ENCODE measurements at regions of chr1 and their contacts with region 1.

Region 1: DNA sequence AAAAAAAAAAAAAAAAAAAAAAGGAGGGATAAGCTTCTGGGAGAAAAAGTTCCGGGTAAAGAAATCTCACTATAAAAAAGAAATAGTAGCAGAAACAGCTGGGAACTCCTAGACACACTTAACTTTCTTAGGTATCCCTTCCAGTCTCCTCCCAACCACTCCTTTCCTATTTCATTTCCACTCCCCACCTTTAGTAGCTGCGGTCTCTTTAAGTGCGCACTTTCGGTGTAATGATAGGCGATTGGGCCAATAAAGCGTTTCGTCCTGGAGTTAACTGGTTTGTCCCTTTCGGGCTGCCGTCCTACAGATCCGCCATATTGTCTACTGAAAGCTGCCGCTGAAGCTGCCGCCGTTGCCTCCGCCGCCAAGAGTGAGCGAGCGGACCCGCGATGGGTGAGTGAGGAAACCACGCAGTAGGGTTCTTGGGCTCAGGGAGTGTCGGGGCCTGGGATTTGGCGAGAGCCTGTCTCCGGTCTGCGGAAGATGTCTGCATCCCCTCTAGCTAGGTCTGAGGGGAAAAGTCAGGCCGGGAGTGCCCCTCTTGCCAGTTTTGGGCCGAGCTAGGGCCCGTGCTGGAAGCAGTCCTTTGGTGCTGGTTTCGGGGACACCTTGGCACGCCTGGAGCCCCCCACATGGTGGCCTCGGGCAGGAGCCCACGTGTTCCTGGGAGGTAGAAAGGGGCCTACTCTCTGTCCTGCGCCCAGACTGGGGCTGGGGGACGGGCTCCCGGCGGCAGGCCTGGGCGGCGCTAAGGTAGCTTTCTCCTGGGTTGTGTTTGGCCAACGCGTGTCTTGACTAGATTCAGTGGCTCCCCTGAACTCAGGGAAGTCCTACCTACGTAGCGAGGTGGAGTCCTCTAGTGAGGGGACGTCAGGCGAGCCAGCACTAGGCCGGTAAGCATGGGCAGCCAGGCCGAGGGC is at the start of gene KPNA6:
- DNase-seq: peak; percentile 83 to 91
- ATAC-seq: peak; percentile 89 to 91
- H3K4me3 ChIP-seq: peak within 1 kb of the TSS; percentile 86 to 98 (median 98)
- H3K27ac ChIP-seq: peak within 1 kb of the TSS; percentile 94 to 99 (median 96)
- H3K4me1 ChIP-seq: peaks cover 40% of the 10 kb centered on the region in 2 donors
- H3K27me3 ChIP-seq: no peaks in the 10 kb centered on the region
- CTCF ChIP-seq: peak in 1 of 5 experiments; percentile 24
- POLR2A ChIP-seq: peak; percentile 60 to 74
- total RNA-seq, gene KPNA6: 67.3 to 80.7 (median 74.4) TPM

Region 2: DNA sequence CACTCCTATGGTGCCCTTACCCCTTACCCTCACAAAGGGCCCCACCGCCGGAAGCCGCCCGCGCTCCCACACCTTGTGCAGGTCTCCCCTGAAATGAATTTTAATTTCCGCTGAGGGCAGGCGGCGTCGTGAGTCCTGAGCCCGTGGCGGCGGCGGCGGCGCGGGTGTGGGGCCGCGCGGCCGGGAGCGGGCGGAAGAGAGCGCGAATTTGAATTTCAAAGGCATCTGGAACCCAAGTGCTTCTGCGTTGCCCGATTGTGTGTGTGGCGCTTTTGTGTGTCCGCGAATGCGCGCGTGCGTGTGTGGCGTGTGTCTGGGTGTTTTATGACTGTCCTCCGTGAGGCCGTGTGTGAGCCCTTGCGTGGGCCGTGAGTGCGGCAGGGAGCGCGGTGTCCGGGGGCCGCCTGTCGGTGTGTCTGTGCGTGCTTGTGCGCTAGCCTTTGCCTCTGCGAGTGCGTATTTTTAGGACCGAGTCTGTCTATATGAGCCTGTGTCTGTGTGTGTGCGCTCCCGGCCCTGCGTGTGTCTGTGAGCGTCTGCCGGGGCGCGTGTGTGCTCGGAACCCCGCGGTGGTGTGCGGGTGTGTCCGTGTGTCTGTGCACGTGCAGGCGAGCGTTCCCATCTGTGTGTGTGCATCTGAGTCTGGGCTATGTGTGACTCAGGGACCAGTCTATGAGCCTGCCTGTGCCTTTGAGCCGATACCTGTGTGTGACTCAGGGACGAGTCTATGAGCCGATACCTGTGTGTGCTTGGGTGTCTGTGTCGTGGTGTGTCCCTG is 335.9 kb before region 1 on chr1:
- in situ Hi-C with region 1: no loop called
- intact Hi-C with region 1: no loop called
- DNase-seq: no peak
- ATAC-seq: no peak
- H3K4me3 ChIP-seq: peak overlapping the region; percentile 2 to 47 (median 22)
- H3K27ac ChIP-seq: no peak overlapping the region
- H3K4me1 ChIP-seq: peaks cover 4 to 9% of the 10 kb centered on the region in 2 donors
- H3K27me3 ChIP-seq: peaks cover 35 to 41% (median 41%) of the 10 kb centered on the region in 3 donors
- CTCF ChIP-seq: no peak
- POLR2A ChIP-seq: no peak

Region 3: GRCh38 chr1:32013386-32014198 is 94.4 kb before region 1 on chr1 and contains the start of gene KHDRBS1:
- in situ Hi-C with region 1: no loop called
- intact Hi-C with region 1: loop called (anchors 2 kb)
- DNase-seq: peak; percentile 97 to 99
- ATAC-seq: peak; percentile 93 to 96
- H3K4me3 ChIP-seq: peak within 1 kb of the TSS; percentile 84 to 96 (median 90)
- H3K27ac ChIP-seq: peak within 1 kb of the TSS; percentile 96 to 99 (median 98)
- H3K4me1 ChIP-seq: peaks cover 19 to 31% of the 10 kb centered on the region in 2 donors
- H3K27me3 ChIP-seq: no peaks in the 10 kb centered on the region
- CTCF ChIP-seq: peak in 1 of 5 experiments; percentile 17
- POLR2A ChIP-seq: peak; percentile 91 to 92
- total RNA-seq, gene KHDRBS1: 19.9 to 50.3 (median 34.6) TPM

Region 4: GRCh38 chr1:32179443-32180185 is 71.6 kb after region 1 on chr1 and contains the start of gene TXLNA:
- in situ Hi-C with region 1: no loop called
- intact Hi-C with region 1: loop called (anchors 5 kb)
- DNase-seq: peak; percentile 90 to 92
- ATAC-seq: peak; percentile 88 to 91
- H3K4me3 ChIP-seq: peak within 1 kb of the TSS; percentile 69 to 84 (median 76)
- H3K27ac ChIP-seq: peak within 1 kb of the TSS; percentile 92 to 98 (median 94)
- H3K4me1 ChIP-seq: peaks cover 33 to 40% of the 10 kb centered on the region in 2 donors
- H3K27me3 ChIP-seq: no peaks in the 10 kb centered on the region
- CTCF ChIP-seq: peak in 2 of 5 experiments; percentile 15 to 39
- POLR2A ChIP-seq: peak; percentile 72 to 75
- total RNA-seq, gene TXLNA: 15.7 to 21.0 (median 17.6) TPM

Region 5: DNA sequence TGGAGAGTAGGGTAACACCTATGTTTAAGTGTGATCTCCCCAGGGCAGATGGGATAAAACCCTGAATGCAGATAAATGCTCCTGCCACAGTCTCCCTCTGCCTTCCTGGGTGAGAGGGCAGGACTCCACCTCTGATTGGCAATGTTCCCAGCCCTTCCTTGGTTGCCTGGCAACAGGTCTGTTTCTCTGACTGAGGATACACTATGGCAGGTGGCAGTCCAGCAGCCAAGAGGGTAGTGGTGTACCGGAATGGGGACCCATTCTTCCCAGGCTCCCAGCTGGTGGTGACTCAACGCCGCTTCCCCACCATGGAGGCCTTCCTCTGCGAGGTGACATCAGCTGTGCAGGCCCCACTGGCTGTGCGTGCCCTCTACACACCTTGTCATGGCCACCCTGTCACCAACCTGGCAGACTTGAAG is 100.9 kb after region 1 on chr1 and contains the start of gene DCDC2B:
- in situ Hi-C with region 1: no loop called
- intact Hi-C with region 1: no loop called
- DNase-seq: peak in 1 of 2 donors; percentile 42
- ATAC-seq: no peak
- H3K4me3 ChIP-seq: no peak within 1 kb of the TSS
- H3K27ac ChIP-seq: peak within 1 kb of the TSS in 1 of 4 donors; percentile 5
- H3K4me1 ChIP-seq: peaks cover 10 to 22% of the 10 kb centered on the region in 2 donors
- H3K27me3 ChIP-seq: no peaks in the 10 kb centered on the region
- CTCF ChIP-seq: no peak
- POLR2A ChIP-seq: no peak
- total RNA-seq, gene DCDC2B: not detected

Region 6: GRCh38 chr1:32221980-32222755 is 114.2 kb after region 1 on chr1 and contains the starts of genes EIF3I and TMEM234:
- in situ Hi-C with region 1: no loop called
- intact Hi-C with region 1: loop called (anchors 10 kb)
- DNase-seq: peak; percentile 87
- ATAC-seq: peak; percentile 98 to 100
- H3K4me3 ChIP-seq: peak within 1 kb of the TSS; percentile 71 to 99 (median 84)
- H3K27ac ChIP-seq: peak within 1 kb of the TSS; percentile 87 to 97 (median 90)
- H3K4me1 ChIP-seq: peaks cover 23 to 28% of the 10 kb centered on the region in 2 donors
- H3K27me3 ChIP-seq: no peaks in the 10 kb centered on the region
- CTCF ChIP-seq: no peak
- POLR2A ChIP-seq: peak; percentile 88 to 96
- total RNA-seq, gene EIF3I: 211 to 294 (median 245) TPM
- total RNA-seq, gene TMEM234: 1.6 to 4.6 (median 4.4) TPM

Region 7: GRCh38 chr1:32240140-32240951 is 132.3 kb after region 1 on chr1:
- in situ Hi-C with region 1: no loop called
- intact Hi-C with region 1: loop called (anchors 5 kb)
- DNase-seq: peak in 1 of 2 donors; percentile 39
- ATAC-seq: peak; percentile 36 to 45
- H3K4me3 ChIP-seq: peak overlapping the region; percentile 62 to 74 (median 64)
- H3K27ac ChIP-seq: peak overlapping the region; percentile 59 to 74 (median 71)
- H3K4me1 ChIP-seq: peaks cover 10 to 13% of the 10 kb centered on the region in 2 donors
- H3K27me3 ChIP-seq: no peaks in the 10 kb centered on the region
- CTCF ChIP-seq: peak in 2 of 5 experiments; percentile 24 to 35
- POLR2A ChIP-seq: peak; percentile 48 to 54